GM13977 (cell line): ENCODE measurements at regions of chr1 and their contacts with region 1.

Region 1: GRCh38 chr1:212665241-212666115 is 34.2 kb downstream of the BATF3 start:
- DNase-seq: peak; percentile 81
- CTCF ChIP-seq: peak; percentile 99

Region 2: DNA sequence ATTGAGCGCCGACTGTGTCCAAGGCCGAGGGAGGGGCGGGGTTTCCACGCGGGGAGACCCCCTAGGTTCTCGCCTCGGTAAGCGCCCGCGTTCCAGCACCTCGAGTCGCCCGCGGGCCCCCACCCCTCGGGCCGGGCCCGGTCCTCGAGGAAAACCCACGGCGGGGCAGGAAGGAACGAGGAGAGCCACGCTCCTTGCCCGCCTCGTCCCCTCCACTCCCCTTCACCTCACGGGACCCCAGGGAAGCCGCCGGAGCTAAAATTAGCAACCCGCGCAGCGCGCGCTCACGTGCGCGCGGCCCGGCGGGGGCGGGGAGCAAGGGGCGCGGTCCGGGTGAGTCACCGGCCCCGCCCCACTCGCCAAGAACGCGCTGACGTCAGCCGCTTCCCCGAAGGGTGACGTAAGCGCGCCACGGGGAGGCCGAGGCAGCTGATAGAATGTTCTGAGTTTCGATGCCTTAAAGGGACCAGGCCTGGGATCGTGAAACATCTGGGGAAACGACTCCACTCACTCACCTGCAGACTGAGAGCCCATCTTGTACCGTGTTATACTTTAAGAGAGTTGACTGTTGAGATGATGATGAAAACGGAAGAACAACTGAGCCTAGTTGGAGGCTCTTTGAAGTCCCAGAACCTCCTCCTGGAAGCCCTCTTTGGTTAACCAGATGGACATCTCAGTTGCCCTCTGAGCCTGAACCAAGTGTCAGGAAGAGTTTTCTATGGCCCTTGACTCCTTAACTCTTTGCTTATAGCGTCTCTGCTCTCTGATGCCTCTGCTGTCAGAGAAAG is 106.6 kb before region 1 on chr1:
- in situ Hi-C with region 1: no loop called
- DNase-seq: peak; percentile 96
- CTCF ChIP-seq: no peak

Region 3: GRCh38 chr1:212749821-212750535 is 84.5 kb after region 1 on chr1:
- in situ Hi-C with region 1: loop called (anchors 25 kb)
- DNase-seq: peak; percentile 20
- CTCF ChIP-seq: peak; percentile 48